Common myeloid progenitor, CD34-positive (primary cell): ENCODE measurements at regions of chr12 and their contacts with region 1.

Region 1: DNA sequence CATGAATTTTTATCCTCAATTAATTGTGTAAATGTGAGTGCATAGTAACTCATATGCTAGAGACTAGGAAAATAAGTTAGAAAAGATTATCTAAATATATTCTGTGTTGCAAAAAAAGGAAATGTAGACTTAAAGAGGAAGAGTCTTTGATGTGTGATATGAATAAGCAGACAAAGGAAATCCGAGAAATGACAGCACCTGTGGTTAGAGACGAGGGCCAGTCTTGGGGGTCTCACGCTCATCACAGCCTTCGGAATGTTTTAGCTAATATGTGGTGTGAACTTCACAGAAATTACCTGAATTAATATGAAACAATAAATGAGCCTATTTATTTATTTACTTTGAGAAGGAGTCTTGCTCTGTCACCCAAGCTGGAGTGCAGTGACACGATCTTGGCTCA is 11.6 kb downstream of the ATP6V0A2 start:
- DNase-seq: peak in 2 of 3 donors; percentile 46 to 52
- H3K4me3 ChIP-seq: no peak overlapping the region
- H3K27ac ChIP-seq: no peak overlapping the region
- H3K4me1 ChIP-seq: peaks cover 0 to 57% (median 22%) of the 10 kb centered on the region in 4 experiments
- H3K27me3 ChIP-seq: no peaks in the 10 kb centered on the region

Region 2: GRCh38 chr12:123744836-123745235 is 21.1 kb after region 1 on chr12:
- CTCF ChIA-PET with region 1: interaction called, 14 read pairs
- POLR2A ChIA-PET with region 1: no interaction called
- DNase-seq: peak in 2 of 3 donors; percentile 33 to 37
- H3K4me3 ChIP-seq: no peak overlapping the region
- H3K27ac ChIP-seq: peak overlapping the region in 1 of 2 experiments; percentile 84
- H3K4me1 ChIP-seq: peaks cover 25 to 86% (median 69%) of the 10 kb centered on the region in 4 experiments
- H3K27me3 ChIP-seq: no peaks in the 10 kb centered on the region